Colonic mucosa (tissue), 4 donors: ENCODE measurements at regions of chr12 and their contacts with region 1.

Region 1: DNA sequence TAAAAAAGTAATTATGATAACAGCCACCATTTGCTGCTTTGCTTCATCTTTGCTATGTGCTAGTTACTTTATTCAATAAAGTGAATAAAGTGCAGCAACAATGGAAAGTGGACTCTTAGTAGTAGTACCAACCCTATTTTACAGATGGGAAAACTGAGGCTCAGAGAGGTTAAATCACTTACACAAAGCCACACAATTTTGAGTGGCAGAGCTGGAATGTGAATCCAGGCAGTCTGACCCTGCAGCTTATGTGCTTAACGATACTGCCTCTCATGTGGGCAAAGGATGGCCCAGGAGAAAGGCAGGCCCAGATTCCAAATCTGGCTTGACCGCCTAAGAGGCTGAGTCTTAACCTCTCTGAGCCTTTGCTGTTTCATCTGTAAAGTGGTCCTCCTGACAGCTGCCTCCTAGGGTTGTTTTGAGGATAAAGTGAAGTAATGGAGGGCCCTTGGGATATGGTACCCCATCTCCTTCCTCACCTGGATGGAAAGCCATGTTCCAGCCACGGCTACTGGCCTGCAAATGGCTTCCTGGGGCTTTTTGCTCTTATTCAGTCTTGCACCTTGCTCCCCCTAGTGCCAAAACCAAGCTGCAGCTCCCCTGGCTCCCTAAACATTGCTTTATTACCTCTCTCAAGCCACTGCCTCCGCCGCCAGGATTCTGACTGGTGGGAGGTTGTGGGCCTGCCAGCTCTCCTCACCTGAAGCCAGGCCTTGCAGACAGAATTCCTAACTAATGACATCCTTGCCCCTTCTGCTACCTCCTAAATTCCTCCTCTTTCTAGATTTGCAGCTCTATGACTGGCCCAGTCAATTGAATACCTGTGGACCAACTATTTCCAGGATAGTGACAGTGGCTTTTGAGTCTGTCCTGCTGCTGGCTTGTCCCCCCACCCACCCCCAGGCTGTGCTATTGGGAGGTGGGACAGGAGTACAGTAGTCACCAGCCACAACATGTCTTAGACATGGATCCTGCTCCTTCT is 283.3 kb upstream of the PWP1 start:
- DNase-seq: peak; percentile 41
- H3K4me3 ChIP-seq: no peak overlapping the region
- H3K27ac ChIP-seq: no peak overlapping the region
- H3K4me1 ChIP-seq: no peaks in the 10 kb centered on the region
- H3K27me3 ChIP-seq: no peaks in the 10 kb centered on the region
- CTCF ChIP-seq: peak; percentile 42

Region 2: DNA sequence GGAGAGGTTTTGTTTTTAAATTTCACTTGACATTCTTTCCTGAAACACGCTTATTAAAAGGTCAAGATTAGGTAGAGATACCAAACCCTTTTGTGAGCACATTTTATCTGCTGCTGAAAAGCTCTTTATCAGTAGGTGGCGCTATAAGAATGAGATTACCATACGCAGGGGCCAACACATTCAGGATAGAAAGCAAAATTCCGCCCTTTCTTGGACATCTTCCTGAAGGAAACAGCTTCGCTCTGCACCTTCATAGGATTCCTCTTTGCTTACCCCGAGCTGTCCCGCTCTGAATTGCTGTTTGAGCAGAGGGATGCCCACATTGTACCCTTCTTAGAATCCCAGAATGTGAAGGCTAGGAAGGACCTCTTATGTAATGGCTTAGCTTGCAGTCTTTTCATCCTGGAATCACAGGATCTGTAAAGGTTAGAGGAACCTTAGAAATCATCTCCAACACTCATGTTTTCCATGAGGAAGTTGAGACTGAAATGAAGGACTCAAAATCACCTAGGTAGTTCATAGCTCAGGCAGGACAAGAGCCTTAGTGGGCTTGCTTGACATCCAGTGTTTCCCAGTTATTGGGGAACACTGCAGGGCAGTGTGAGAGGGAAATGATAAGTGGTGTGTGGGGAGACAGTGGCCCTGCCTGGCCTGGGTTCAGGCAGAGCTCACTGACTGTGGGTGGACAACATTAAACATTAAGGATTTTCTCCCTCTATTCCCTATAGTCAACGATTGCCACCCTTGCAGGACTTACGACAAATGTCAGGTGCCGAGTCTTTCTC is 270.3 kb before region 1 on chr12:
- intact Hi-C with region 1: loop called (anchors 5 kb)
- DNase-seq: peak; percentile 21
- H3K4me3 ChIP-seq: no peak overlapping the region
- H3K27ac ChIP-seq: no peak overlapping the region
- H3K4me1 ChIP-seq: no peaks in the 10 kb centered on the region
- H3K27me3 ChIP-seq: no peaks in the 10 kb centered on the region
- CTCF ChIP-seq: peak; percentile 69